Activated CD4-positive, alpha-beta memory T cell treated with anti-CD3 and anti-CD28 coated beads, Interleukin-2, amount 10 ng/mL, durations not matched to agents 7 days and 5 days (primary cell): ENCODE measurements at regions of chr15 and their contacts with region 1.

Region 1: GRCh38 chr15:68304589-68305337 is 27.2 kb downstream of the FEM1B start:
- DNase-seq: peak; percentile 9
- H3K4me3 Mint-ChIP-seq: no peak overlapping the region
- H3K27ac Mint-ChIP-seq: no peak overlapping the region
- H3K4me1 Mint-ChIP-seq: peaks cover 9% of the 10 kb centered on the region
- H3K27me3 Mint-ChIP-seq: peaks cover 7% of the 10 kb centered on the region

Region 2: GRCh38 chr15:68218847-68219798 is 85.6 kb before region 1 on chr15:
- CTCF ChIA-PET with region 1: no interaction called
- POLR2A ChIA-PET with region 1: no interaction called
- DNase-seq: no peak
- H3K4me3 Mint-ChIP-seq: no peak overlapping the region
- H3K27ac Mint-ChIP-seq: no peak overlapping the region
- H3K4me1 Mint-ChIP-seq: peaks cover 4% of the 10 kb centered on the region
- H3K27me3 Mint-ChIP-seq: no peaks in the 10 kb centered on the region

Region 3: DNA sequence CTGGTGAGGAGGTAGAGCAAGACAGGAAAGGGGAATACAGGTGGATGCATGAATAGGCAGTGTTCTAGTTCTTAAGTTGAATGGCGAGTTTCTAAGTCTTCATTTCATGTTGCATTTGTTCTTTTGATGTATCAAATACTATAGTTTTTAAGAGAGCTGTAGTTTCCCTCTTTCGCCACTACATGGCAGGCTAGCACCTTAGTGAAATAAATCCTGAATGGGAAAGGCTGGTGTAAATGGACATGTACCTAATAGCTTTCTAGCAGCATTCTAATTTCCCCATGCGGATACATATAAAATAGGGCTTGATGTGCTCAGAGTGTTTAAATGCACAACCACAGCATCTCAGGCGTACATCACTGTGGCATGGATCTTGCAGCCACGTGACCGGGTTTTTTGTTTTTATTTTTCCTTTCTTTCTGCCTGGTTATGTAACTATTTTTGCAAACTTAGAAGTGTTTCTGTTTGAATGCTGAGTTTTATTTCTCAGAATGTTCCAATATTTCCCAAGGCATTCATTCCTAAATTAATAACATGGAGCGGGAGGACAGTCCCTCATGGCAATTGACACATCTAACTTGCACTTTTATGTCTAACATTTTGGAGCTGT is 51.7 kb before region 1 on chr15:
- CTCF ChIA-PET with region 1: interaction called, 37 read pairs
- POLR2A ChIA-PET with region 1: no interaction called
- DNase-seq: peak; percentile 38
- H3K4me3 Mint-ChIP-seq: no peak overlapping the region
- H3K27ac Mint-ChIP-seq: no peak overlapping the region
- H3K4me1 Mint-ChIP-seq: peaks cover 5% of the 10 kb centered on the region
- H3K27me3 Mint-ChIP-seq: peaks cover 22% of the 10 kb centered on the region

Region 4: DNA sequence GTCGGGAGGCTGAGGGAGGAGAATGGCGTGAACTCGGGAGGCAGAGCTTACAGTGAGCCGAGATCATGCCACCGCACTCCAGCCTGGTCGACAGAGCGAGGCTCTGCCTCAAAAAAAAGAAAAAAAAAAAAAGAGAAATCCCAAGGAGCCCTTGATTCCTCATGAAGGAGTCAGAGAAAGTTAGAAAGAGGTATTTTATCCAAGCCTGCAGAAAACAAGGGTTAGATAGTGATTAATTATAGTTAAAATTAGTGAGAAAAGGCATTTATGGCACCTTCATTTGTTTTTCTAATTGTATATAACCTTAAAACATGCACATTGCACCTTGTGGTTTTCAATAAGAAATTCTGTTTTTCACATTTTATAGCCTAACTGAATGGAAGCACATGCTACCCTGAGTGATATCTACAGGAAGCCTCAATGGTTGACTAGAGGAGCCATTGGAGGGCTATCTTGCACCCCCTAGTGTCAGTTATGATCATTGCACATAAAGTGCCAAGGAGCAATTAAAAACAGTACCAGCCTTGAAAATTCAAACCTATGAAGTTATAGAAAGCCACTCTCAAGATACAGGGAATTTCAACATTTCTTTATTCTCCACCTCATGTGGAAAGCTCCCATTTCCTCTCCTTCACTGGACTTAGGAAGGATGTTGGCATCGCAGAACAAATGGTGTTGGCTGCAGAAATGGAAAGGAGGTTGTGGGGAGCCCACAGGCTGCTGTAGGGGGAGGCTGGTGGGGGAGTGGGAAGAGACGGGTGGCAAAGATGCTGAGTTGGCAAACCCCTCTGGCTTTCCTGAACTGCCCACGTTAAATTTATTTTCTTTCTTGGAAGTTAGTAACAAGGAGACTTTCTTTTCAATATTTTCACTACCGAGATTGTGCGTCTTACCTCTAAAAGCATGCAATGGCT is 78.7 kb after region 1 on chr15:
- CTCF ChIA-PET with region 1: interaction called, 30 read pairs
- POLR2A ChIA-PET with region 1: interaction called, 3 read pairs
- DNase-seq: peak; percentile 50
- H3K4me3 Mint-ChIP-seq: no peak overlapping the region
- H3K27ac Mint-ChIP-seq: no peak overlapping the region
- H3K4me1 Mint-ChIP-seq: peaks cover 17% of the 10 kb centered on the region
- H3K27me3 Mint-ChIP-seq: peaks cover 4% of the 10 kb centered on the region

Region 5: GRCh38 chr15:68389936-68390790 is 85.4 kb after region 1 on chr15:
- CTCF ChIA-PET with region 1: interaction called, 11 read pairs
- POLR2A ChIA-PET with region 1: interaction called, 3 read pairs
- DNase-seq: peak; percentile 68
- H3K4me3 Mint-ChIP-seq: no peak overlapping the region
- H3K27ac Mint-ChIP-seq: peak overlapping the region; percentile 51
- H3K4me1 Mint-ChIP-seq: peaks cover 25% of the 10 kb centered on the region
- H3K27me3 Mint-ChIP-seq: peaks cover 27% of the 10 kb centered on the region

Region 6: GRCh38 chr15:68537107-68537905 is 232.5 kb after region 1 on chr15:
- CTCF ChIA-PET with region 1: interaction called, 24 read pairs
- POLR2A ChIA-PET with region 1: no interaction called
- DNase-seq: no peak
- H3K4me3 Mint-ChIP-seq: no peak overlapping the region
- H3K27ac Mint-ChIP-seq: no peak overlapping the region
- H3K4me1 Mint-ChIP-seq: no peaks in the 10 kb centered on the region
- H3K27me3 Mint-ChIP-seq: peaks cover 42% of the 10 kb centered on the region

Region 7: GRCh38 chr15:68550481-68551295 is 245.9 kb after region 1 on chr15:
- CTCF ChIA-PET with region 1: interaction called, 19 read pairs
- POLR2A ChIA-PET with region 1: no interaction called
- DNase-seq: peak; percentile 75
- H3K4me3 Mint-ChIP-seq: no peak overlapping the region
- H3K27ac Mint-ChIP-seq: no peak overlapping the region
- H3K4me1 Mint-ChIP-seq: peaks cover 8% of the 10 kb centered on the region
- H3K27me3 Mint-ChIP-seq: peaks cover 47% of the 10 kb centered on the region

Region 8: DNA sequence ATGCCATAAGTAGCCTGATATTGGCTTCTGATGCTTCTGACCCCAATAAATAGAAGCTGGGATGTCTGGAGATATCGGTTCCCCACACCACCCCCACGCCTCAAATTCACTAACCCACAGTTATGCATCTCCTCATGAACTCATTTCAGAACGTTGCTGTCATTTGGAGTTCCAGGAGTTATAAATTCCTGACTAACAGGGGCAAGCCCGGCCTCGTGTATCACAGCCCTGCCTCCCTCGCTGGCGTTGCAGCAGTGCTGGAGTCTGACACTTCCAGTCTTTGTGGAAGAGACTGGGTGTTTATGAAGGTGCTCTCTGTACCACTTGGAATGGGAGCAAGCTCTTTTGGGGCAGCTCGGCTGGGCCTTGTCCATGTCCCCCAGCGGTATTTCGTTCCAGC is 414.9 kb after region 1 on chr15:
- CTCF ChIA-PET with region 1: no interaction called
- POLR2A ChIA-PET with region 1: no interaction called
- DNase-seq: no peak
- H3K4me3 Mint-ChIP-seq: no peak overlapping the region
- H3K27ac Mint-ChIP-seq: no peak overlapping the region
- H3K4me1 Mint-ChIP-seq: no peaks in the 10 kb centered on the region
- H3K27me3 Mint-ChIP-seq: peaks cover 13% of the 10 kb centered on the region